CD4-positive, alpha-beta T cell (primary cell): ENCODE measurements at regions of chr5 and their contacts with region 1.

Region 1: DNA sequence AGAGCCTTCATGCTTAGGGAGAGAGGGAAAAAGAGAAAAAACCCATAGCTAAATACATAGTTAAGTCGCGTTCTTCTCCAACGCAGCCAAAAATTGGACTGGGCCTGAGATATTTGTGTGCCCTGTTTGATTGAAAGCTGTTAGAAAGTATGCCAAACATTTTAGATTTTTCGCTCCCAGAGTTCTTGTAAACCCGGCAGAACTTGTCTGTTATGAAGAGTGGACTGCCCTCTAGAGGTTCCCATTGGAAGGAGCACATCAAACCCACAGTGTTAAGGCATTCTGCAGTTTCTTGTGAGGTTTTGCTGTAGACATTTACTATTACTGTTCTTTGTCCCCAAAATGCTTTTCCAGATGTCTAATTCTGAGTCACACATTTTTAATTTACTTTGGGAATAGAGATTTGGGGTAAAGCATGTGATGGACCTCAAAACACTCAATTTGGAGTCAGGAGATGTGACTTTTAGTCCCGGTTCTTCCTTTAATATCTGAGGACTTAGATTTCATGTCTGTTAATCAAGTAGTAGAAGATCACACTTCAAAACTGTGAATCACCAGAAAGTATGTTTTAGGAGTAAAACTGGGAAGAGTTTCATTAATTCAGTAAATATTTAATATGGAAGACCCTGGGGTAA is 96.6 kb downstream of the PCSK1 start:
- DNase-seq: peak in 13 of 14 experiments; percentile 16 to 83 (median 48)
- ATAC-seq: peak; percentile 95
- H3K4me3 ChIP-seq: no peak overlapping the region
- H3K4me3 Mint-ChIP-seq: no peak overlapping the region
- H3K27ac ChIP-seq: no peak overlapping the region
- H3K27ac Mint-ChIP-seq: no peak overlapping the region
- H3K4me1 ChIP-seq: no peaks in the 10 kb centered on the region
- H3K4me1 Mint-ChIP-seq: no peaks in the 10 kb centered on the region
- H3K27me3 ChIP-seq: no peaks in the 10 kb centered on the region
- H3K27me3 Mint-ChIP-seq: peaks cover 19% of the 10 kb centered on the region
- CTCF ChIP-seq: peak; percentile 81

Region 2: GRCh38 chr5:95664204-95664786 is 672.2 kb before region 1 on chr5:
- CTCF ChIA-PET with region 1: no interaction called
- POLR2A ChIA-PET with region 1: no interaction called
- intact Hi-C with region 1: loop called in 1 of 2 experiments (anchors 10 kb)
- DNase-seq: peak in 9 of 14 experiments; percentile 6 to 62 (median 20)
- ATAC-seq: no peak
- H3K4me3 ChIP-seq: no peak overlapping the region
- H3K4me3 Mint-ChIP-seq: no peak overlapping the region
- H3K27ac ChIP-seq: no peak overlapping the region
- H3K27ac Mint-ChIP-seq: no peak overlapping the region
- H3K4me1 ChIP-seq: no peaks in the 10 kb centered on the region
- H3K4me1 Mint-ChIP-seq: peaks cover 6% of the 10 kb centered on the region
- H3K27me3 ChIP-seq: no peaks in the 10 kb centered on the region
- H3K27me3 Mint-ChIP-seq: no peaks in the 10 kb centered on the region
- CTCF ChIP-seq: peak; percentile 95

Region 3: DNA sequence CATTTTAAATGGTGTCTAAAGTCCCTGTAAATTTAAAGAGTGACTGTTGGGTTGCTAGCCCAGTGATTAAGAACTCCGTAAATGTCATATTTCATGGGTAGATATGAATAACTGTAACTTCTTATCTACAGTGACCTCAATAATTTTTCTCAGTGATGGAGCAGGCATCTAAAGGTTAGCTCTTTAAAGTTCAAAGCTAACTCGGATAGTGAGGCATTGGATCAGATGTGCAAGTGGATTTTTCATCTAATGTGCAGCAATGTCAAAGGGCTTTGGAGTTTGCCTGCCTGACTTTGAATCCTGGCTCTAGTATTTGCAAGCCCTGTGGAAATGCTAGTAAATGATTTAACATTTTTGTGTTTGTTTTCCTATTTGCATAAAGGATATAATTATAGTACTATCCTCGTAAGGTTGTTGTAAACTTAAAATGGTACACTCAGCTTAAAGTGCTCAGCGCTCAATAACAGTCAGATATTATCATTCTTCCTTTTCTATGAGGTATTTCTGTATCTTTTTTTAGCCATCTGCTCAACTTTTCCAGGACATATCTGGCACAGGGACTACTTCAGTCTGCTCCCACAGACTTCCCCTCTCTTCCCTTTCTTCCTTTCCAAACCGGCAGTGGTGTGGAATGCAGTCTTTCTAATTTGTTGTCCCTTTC is 211.1 kb before region 1 on chr5:
- CTCF ChIA-PET with region 1: no interaction called
- POLR2A ChIA-PET with region 1: no interaction called
- intact Hi-C with region 1: no loop called
- DNase-seq: no peak
- ATAC-seq: no peak
- H3K4me3 ChIP-seq: no peak overlapping the region
- H3K4me3 Mint-ChIP-seq: no peak overlapping the region
- H3K27ac ChIP-seq: no peak overlapping the region
- H3K27ac Mint-ChIP-seq: no peak overlapping the region
- H3K4me1 ChIP-seq: no peaks in the 10 kb centered on the region
- H3K4me1 Mint-ChIP-seq: no peaks in the 10 kb centered on the region
- H3K27me3 ChIP-seq: no peaks in the 10 kb centered on the region
- H3K27me3 Mint-ChIP-seq: peaks cover 37% of the 10 kb centered on the region
- CTCF ChIP-seq: no peak

Region 4: DNA sequence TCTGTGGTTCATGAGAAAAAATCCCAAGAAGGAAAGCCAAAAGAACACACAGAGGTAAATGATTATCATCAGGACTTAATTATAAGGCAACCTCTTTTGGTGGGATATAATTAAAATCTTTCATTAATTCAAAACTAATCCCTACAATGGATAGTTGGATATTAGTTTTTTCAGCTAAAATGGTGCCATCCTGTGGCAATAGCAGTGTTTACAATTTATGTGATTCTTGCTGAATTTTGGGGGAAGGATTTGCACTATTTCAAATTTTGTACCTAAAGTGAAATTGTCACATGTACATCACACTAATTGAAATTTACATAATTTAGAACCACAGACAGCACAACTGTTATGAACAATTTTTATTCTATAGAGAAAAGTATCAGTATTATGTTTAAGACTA is 392.7 kb after region 1 on chr5:
- CTCF ChIA-PET with region 1: no interaction called
- POLR2A ChIA-PET with region 1: no interaction called
- intact Hi-C with region 1: loop called (anchors 10 kb)
- DNase-seq: no peak
- ATAC-seq: no peak
- H3K4me3 ChIP-seq: no peak overlapping the region
- H3K4me3 Mint-ChIP-seq: no peak overlapping the region
- H3K27ac ChIP-seq: no peak overlapping the region
- H3K27ac Mint-ChIP-seq: no peak overlapping the region
- H3K4me1 ChIP-seq: no peaks in the 10 kb centered on the region
- H3K4me1 Mint-ChIP-seq: peaks cover 4% of the 10 kb centered on the region
- H3K27me3 ChIP-seq: no peaks in the 10 kb centered on the region
- H3K27me3 Mint-ChIP-seq: no peaks in the 10 kb centered on the region
- CTCF ChIP-seq: peak; percentile 25